Motor neuron (in vitro differentiated cells): ENCODE measurements at regions of chr17 and their contacts with region 1.

Region 1: DNA sequence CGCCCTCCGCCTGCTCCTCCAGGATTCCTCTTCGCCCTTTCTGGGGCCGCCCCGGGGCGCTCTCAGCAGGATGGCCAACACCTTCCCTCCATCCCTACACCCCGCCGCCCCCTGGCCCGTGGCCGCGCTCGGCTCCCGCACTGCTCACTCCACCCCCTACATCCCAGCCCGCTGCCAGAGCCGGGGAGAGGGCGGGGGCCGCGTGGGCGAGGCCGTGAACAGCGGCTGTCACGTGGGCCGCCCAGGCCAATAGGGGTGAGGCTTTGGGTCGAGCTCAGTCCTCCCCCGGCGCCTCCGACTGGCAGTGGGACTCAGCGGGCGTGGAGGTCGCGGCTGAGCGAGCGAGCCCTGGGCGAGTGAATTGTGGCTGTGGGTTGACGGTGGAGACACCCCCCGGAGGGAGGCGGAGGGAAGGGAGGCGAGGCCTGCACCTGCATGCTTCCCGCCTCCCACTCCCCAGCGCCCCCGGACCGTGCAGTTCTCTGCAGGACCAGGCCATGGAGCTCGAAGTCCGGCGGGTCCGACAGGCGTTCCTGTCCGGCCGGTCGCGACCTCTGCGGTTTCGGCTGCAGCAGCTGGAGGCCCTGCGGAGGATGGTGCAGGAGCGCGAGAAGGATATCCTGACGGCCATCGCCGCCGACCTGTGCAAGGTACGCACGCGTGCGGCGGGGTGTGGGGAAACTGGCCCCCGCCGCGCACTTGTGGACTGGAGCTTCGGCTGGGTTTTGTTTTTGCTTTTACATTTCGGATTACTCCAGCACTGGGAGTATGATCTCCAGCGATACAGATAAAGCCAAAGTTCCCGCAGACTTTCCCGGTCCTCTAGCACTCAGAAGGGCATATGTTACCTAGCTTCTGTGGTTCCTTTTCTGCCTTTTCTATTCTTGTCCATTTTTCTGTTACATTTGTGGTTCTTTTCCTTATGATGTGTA is at the start of gene ALDH3A2:
- ATAC-seq: peak; percentile 92 to 97 (median 96)
- H3K4me3 ChIP-seq: peak within 1 kb of the TSS; percentile 51 to 71 (median 60)
- H3K27ac ChIP-seq: peak within 1 kb of the TSS; percentile 85 to 92
- H3K4me1 ChIP-seq: peaks cover 18 to 29% of the 10 kb centered on the region in 2 donors
- total RNA-seq, gene ALDH3A2: 25.6 to 47.2 (median 30.4) TPM

Region 2: GRCh38 chr17:19482576-19482975 is 166.2 kb before region 1 on chr17:
- in situ Hi-C with region 1: no loop called
- ATAC-seq: peak in 3 of 8 experiments; percentile 63 to 93 (median 82)
- H3K4me3 ChIP-seq: no peak overlapping the region
- H3K27ac ChIP-seq: no peak overlapping the region
- H3K4me1 ChIP-seq: no peaks in the 10 kb centered on the region

Region 3: GRCh38 chr17:19513897-19514488 is 134.7 kb before region 1 on chr17:
- in situ Hi-C with region 1: loop called in 1 of 9 experiments (anchors 10 kb)
- ATAC-seq: peak; percentile 74 to 94 (median 82)
- H3K4me3 ChIP-seq: no peak overlapping the region
- H3K27ac ChIP-seq: no peak overlapping the region
- H3K4me1 ChIP-seq: no peaks in the 10 kb centered on the region